Testis (tissue), 5 donors: ENCODE measurements at regions of chr9 and their contacts with region 1.

Region 1: DNA sequence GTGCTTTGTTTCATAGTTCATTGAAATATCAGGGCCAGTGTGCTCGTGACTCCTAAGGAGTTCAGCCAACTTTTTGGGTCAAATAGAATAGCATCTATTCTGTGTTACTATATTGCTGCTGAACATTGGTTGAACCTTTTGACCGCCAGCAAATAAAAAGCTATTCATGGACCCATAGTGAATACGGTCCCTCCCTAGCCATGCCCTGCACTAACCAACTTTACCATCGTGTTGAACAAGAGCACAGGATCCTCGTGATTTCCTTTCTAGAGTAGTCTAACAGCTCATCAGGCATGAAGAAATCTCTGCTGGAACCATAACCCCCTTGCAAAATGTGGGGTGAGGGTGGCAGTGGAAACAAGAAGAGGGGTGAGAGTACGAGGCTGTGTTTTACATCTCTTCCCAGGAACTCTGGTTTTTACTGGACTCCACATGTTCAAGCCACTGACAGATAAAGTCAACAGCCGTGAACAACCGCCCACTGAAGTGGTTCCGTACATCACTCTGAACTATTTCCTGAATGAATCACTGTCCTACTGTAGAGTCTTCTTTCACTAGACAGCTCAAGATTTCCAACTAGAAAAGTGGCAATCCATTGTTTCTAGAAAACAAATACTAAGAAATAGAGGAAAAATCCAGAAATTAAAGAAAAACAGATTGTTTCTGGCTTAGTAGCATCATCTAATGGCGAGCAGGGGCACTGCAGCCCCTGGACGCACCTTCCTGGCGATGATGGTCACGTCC is 70.1 kb upstream of the SPATA31E1 start:
- DNase-seq: peak; percentile 29
- H3K4me3 ChIP-seq: no peak overlapping the region
- H3K27ac ChIP-seq: no peak overlapping the region
- H3K4me1 ChIP-seq: no peaks in the 10 kb centered on the region
- H3K27me3 ChIP-seq: no peaks in the 10 kb centered on the region
- CTCF ChIP-seq: peak; percentile 50 to 76 (median 66)
- POLR2A ChIP-seq: no peak

Region 2: DNA sequence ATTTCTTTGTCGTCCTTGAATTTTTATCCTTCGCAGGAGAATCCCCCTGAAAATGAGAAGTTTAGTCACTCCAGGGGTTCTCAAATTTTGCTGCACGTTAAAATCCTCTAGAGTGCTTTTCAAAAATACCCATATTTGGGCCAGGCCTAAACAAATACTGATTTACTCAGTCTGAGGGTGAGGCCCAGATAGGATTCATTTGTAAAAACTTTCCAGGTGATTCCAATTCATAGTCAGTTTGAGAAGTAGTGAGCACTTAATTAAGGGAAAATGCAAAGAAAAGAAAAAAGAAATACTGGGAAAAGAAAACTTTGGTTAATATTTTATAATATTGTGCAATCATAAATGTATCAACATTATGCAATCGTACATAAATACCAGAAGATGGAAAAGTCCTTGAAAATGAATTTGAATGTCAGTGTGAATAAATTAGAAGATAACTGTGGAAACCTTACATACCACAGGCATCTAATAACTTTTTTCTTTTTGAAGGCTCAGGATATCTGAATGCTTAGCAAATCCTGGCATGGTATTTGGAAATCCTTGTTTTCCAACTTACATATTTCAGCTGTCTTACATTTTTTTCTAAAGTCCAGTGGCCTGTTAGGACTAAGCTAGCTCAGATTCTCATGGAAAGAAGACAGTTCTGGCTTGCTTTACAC is 431.4 kb before region 1 on chr9:
- intact Hi-C with region 1: no loop called
- DNase-seq: no peak
- H3K4me3 ChIP-seq: no peak overlapping the region
- H3K27ac ChIP-seq: no peak overlapping the region
- H3K4me1 ChIP-seq: peaks cover 10% of the 10 kb centered on the region
- H3K27me3 ChIP-seq: no peaks in the 10 kb centered on the region
- CTCF ChIP-seq: no peak
- POLR2A ChIP-seq: no peak

Region 3: DNA sequence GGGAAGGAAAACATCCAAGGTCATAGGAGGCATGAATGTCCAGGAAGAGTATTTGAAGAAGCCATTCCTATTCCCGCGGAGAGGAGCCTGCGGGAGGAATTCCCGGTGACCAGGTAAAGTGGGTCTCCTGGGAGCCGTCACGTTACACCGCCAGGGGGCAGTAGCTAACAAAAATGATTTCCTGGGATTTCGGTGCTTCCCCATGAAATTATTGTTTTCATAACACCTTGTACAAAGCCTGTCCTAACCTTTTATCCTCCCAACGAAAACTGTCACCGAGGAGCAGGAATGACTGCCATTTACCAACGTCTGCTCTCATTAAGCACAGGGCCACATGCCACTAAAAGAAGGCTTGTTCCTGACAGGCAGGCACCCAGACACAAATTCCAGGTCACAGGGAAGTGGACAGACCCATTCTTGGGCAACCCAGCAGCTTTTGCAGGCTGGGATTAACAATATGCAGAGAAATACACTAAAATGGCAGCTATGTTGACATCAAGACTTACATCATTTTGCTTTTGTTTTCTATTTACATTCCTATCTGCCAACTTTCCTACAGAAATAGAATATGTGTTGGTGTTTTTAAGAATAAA is 127.8 kb before region 1 on chr9:
- intact Hi-C with region 1: loop called (anchors 10 kb)
- DNase-seq: peak; percentile 74
- H3K4me3 ChIP-seq: peak overlapping the region; percentile 4 to 12
- H3K27ac ChIP-seq: no peak overlapping the region
- H3K4me1 ChIP-seq: peaks cover 15% of the 10 kb centered on the region
- H3K27me3 ChIP-seq: no peaks in the 10 kb centered on the region
- CTCF ChIP-seq: peak; percentile 52 to 82 (median 54)
- POLR2A ChIP-seq: no peak

Region 4: GRCh38 chr9:87766703-87767102 is 45.8 kb before region 1 on chr9:
- intact Hi-C with region 1: no loop called
- DNase-seq: no peak
- H3K4me3 ChIP-seq: no peak overlapping the region
- H3K27ac ChIP-seq: no peak overlapping the region
- H3K4me1 ChIP-seq: no peaks in the 10 kb centered on the region
- H3K27me3 ChIP-seq: no peaks in the 10 kb centered on the region
- CTCF ChIP-seq: no peak
- POLR2A ChIP-seq: no peak

Region 5: DNA sequence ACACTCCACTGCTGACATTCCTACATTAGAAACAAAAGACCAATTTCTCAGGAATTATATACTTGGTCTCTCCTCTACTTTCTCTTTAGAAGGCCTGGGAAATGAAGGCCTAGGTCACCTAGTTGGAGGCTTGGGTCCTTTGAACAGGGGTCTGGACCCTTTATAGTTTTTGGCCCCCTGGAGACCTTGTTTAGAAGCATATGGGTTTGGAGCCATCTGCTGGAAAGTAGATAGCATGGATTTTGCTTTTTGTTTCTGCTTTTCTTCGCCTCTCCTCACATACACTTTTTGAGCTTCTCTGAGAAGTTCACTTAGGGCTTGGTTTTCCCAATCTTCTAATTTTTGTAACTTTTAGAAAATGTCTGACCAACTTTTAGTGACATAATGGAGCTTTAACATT is 228.9 kb after region 1 on chr9:
- intact Hi-C with region 1: no loop called
- DNase-seq: no peak
- H3K4me3 ChIP-seq: no peak overlapping the region
- H3K27ac ChIP-seq: no peak overlapping the region
- H3K4me1 ChIP-seq: no peaks in the 10 kb centered on the region
- H3K27me3 ChIP-seq: no peaks in the 10 kb centered on the region
- CTCF ChIP-seq: peak; percentile 22 to 43 (median 31)
- POLR2A ChIP-seq: no peak

Region 6: GRCh38 chr9:88418715-88419540 is 606.4 kb after region 1 on chr9:
- intact Hi-C with region 1: no loop called
- DNase-seq: no peak
- H3K4me3 ChIP-seq: no peak overlapping the region
- H3K27ac ChIP-seq: no peak overlapping the region
- H3K4me1 ChIP-seq: no peaks in the 10 kb centered on the region
- H3K27me3 ChIP-seq: no peaks in the 10 kb centered on the region
- CTCF ChIP-seq: no peak
- POLR2A ChIP-seq: no peak